ENCODE measurements at regions of chr19 and their contacts with region 1.

Region 1: DNA sequence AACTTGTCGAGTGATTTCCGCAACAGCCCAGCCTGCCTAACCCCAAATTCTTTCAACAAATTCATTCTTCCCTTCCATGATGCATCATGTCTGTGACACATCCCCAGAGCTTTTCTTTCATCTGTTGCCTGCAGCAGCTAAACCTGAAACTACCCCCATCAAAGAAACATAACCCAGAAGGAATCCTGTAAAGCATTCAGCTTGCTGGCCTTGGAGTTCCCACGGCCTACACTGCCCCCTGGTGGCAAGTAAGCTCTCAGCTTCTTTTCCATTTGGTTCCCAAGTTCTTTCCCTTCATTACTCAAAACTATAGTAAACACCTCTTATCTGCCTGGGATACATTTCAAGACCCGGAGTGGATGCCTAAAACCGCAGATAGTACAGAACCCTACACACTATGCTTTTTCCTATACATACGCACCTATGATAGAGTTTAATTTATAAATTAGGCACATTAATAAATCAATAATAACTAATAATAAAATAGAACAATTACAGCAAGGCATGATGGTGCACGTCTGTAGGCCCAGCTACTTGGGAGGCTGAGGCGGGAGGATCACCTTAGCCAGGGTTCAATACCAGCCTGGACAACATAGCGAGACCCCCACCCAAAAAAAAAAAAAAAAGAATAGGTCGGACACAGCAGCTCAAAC is 7.4 kb downstream of the ETHE1 start:
- DNase-seq: peak; percentile 66 to 90
- H3K4me3 ChIP-seq: no peak overlapping the region
- H3K27ac ChIP-seq: no peak overlapping the region
- H3K4me1 ChIP-seq: no peaks in the 10 kb centered on the region
- H3K27me3 ChIP-seq: no peaks in the 10 kb centered on the region
- CTCF ChIP-seq: peak; percentile 74 to 91 (median 76)
- EP300 ChIP-seq: no peak
- POLR2A ChIP-seq: no peak
- RAD21 ChIP-seq: peak; percentile 94 to 97

Region 2: DNA sequence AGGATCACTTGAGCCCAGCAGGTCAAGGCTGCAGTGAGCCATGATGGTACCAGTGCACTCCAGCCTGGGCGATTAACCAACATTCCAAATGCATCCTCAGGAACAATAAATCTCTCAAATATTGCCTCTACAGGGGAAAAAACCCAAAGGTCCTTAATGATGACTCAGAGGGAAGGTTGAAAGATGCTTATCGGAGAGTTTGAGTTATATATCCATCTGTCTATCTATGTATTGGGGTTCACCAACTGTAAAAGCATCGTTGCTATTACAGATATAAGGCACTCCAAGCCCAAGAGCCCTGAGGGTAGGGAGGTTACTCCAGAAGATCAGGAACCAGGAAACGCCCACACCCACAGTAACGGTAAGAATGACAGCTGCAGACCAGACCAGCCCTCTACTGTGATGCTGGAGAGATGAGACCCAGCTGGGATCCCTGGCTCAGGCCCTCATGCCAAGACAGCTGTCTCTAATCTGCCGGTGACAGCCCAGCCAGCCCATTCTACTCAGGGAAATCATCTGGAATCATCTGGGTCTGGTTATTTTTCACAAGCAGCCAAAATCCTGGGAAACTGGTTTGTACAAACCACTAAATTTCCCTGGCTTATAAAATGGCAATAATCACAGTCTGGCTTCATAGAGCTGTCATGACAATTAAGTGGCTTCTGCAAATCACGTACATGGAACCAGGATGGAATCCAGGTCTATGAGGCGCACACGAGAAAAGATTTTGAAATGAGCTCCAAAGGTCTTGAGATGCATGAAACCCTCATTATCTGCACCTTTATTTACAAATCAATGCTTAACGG is 81.1 kb before region 1 on chr19:
- CTCF ChIA-PET with region 1: interaction called, 49 read pairs
- POLR2A ChIA-PET with region 1: no interaction called
- DNase-seq: no peak
- H3K4me3 ChIP-seq: no peak overlapping the region
- H3K27ac ChIP-seq: no peak overlapping the region
- H3K4me1 ChIP-seq: no peaks in the 10 kb centered on the region
- H3K27me3 ChIP-seq: no peaks in the 10 kb centered on the region
- CTCF ChIP-seq: no peak
- EP300 ChIP-seq: no peak
- POLR2A ChIP-seq: no peak
- RAD21 ChIP-seq: no peak

Region 3: GRCh38 chr19:43457809-43458208 is 61.8 kb before region 1 on chr19:
- CTCF ChIA-PET with region 1: interaction called, 20 read pairs
- POLR2A ChIA-PET with region 1: interaction called, 4 read pairs
- DNase-seq: no peak
- H3K4me3 ChIP-seq: no peak overlapping the region
- H3K27ac ChIP-seq: no peak overlapping the region
- H3K4me1 ChIP-seq: peaks cover 0 to 2% (median 0%) of the 10 kb centered on the region in 4 experiments; a peak in 2 of 7 replicates
- H3K27me3 ChIP-seq: peaks cover 0 to 8% (median 1%) of the 10 kb centered on the region in 4 experiments; a peak in 2 of 7 replicates
- CTCF ChIP-seq: no peak
- EP300 ChIP-seq: no peak
- POLR2A ChIP-seq: no peak
- RAD21 ChIP-seq: no peak

Region 4: GRCh38 chr19:43498233-43498842 is 21.2 kb before region 1 on chr19:
- CTCF ChIA-PET with region 1: interaction called, 19 read pairs
- POLR2A ChIA-PET with region 1: interaction called, 4 read pairs
- DNase-seq: no peak
- H3K4me3 ChIP-seq: no peak overlapping the region
- H3K27ac ChIP-seq: no peak overlapping the region
- H3K4me1 ChIP-seq: peaks cover 0 to 4% (median 0%) of the 10 kb centered on the region in 4 experiments; a peak in 1 of 7 replicates
- H3K27me3 ChIP-seq: peaks cover 2 to 11% (median 9%) of the 10 kb centered on the region in 4 experiments
- CTCF ChIP-seq: no peak
- EP300 ChIP-seq: no peak
- POLR2A ChIP-seq: no peak
- RAD21 ChIP-seq: no peak